ENCODE measurements at regions of chr17 and their contacts with region 1.

Region 1: DNA sequence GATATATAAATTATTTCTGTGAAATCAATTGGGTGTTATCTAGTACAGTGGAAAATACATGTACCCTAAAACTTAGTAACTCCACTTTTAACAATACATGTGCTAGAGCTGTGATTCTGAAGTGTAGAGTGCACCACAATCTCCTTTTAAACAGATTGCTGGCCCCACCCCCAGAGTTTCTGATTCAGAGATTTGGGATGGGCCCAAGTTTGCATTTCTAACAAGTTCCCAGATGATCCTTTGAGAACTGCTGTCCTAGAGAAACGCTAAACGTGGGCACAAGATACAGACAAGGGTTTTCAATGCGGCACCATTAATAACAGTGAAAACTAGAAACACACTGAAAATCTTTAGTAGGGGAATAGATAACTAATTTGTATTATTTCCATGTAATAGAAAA is 49.2 kb downstream of the NXPH3 start:
- DNase-seq: no peak
- H3K4me3 ChIP-seq: no peak overlapping the region
- H3K27ac ChIP-seq: no peak overlapping the region
- H3K4me1 ChIP-seq: peaks cover 20% of the 10 kb centered on the region
- H3K27me3 ChIP-seq: no peaks in the 10 kb centered on the region
- CTCF ChIP-seq: no peak
- POLR2A ChIP-seq: no peak

Region 2: DNA sequence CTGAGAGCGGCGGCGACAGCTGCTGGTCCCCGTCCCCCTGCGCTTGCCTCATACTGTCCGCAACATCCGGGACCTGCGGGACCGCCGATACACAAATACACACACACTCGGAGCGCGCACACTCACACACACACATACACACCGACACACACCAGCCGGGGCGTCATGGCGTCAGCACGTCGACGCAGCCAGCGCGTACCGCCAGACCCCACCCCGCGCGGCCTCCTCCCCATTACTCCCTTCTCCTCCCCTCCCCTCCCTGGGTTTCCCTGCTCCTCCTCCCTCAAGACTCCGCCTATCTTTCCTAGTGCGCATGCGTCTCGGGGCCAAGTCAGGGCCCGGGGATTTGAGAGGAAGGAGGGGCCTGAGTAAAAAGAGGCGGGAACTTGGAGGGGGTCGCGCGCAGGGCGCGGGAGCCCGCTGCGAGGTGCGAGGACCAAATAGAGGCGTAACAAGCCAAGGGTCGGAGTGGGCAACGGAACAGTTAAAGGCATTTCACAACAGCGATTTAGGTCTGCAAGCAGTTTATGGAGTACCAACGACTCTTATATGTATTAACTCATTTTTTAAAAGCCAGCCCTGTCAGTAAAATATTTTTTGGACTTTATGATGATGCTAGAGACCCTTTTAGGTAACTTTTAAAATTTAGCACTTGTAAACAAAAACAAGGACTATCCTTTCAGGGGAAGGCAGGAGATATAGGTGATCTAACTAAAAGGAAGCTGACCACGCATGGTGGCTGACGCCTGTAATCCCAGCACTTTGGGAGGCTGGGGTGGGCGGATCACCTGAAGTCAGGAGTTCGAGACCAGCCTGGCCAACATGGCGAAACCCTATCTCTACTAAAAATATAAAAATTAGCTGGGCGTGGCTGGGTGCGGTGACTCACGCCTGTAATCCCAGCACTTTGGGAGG is 53.3 kb after region 1 on chr17 and contains the start of gene SPOP:
- CTCF ChIA-PET with region 1: no interaction called
- POLR2A ChIA-PET with region 1: no interaction called
- dilution Hi-C with region 1: no loop called
- intact Hi-C with region 1: loop called (anchors 5 kb)
- DNase-seq: peak; percentile 99
- H3K4me3 ChIP-seq: peak within 1 kb of the TSS; percentile 38 to 86 (median 75)
- H3K27ac ChIP-seq: peak within 1 kb of the TSS; percentile 45
- H3K4me1 ChIP-seq: peaks cover 10% of the 10 kb centered on the region
- H3K27me3 ChIP-seq: no peaks in the 10 kb centered on the region
- CTCF ChIP-seq: no peak
- POLR2A ChIP-seq: peak; percentile 73
- total RNA-seq, gene SPOP: 61.0 and 61.9 TPM in 2 replicates

Region 3: DNA sequence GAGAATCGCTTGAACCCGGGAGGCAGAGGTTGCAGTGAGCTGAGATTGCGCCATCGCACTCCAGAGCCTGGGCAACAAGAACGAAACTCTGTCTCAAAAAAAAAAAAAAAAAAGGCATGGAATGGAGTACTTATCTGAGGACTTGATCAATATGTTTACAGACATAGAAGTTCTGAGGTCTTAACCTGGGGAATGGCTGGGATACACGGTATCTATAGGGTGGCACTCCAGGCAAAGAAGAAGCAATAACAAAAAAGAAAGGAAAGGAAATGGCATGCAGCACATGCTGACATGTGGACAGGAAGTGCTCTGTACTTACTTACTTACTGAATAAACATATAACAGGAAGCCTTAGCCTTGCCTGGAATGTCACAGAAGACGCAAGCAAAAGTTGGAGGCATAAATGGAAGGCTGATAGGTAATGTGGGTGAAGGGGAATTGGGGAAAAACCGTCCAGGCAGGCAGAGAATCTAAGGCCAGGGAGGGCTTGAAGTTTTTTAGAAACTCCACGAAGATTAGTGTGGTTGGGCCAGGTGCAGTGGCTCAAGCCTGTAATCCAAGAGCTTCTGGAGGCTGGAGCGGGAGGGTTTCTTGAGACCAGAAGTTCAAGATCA is 63.1 kb after region 1 on chr17:
- CTCF ChIA-PET with region 1: interaction called, 3 read pairs
- POLR2A ChIA-PET with region 1: no interaction called
- dilution Hi-C with region 1: no loop called
- intact Hi-C with region 1: loop called (anchors 2 kb)
- DNase-seq: peak; percentile 96
- H3K4me3 ChIP-seq: no peak overlapping the region
- H3K27ac ChIP-seq: peak overlapping the region; percentile 87
- H3K4me1 ChIP-seq: peaks cover 42% of the 10 kb centered on the region
- H3K27me3 ChIP-seq: no peaks in the 10 kb centered on the region
- CTCF ChIP-seq: no peak
- POLR2A ChIP-seq: peak; percentile 70

Measured in endothelial cell of umbilical vein (primary cell).